ENCODE measurements at regions of chr17 and their contacts with region 1.

Region 1: DNA sequence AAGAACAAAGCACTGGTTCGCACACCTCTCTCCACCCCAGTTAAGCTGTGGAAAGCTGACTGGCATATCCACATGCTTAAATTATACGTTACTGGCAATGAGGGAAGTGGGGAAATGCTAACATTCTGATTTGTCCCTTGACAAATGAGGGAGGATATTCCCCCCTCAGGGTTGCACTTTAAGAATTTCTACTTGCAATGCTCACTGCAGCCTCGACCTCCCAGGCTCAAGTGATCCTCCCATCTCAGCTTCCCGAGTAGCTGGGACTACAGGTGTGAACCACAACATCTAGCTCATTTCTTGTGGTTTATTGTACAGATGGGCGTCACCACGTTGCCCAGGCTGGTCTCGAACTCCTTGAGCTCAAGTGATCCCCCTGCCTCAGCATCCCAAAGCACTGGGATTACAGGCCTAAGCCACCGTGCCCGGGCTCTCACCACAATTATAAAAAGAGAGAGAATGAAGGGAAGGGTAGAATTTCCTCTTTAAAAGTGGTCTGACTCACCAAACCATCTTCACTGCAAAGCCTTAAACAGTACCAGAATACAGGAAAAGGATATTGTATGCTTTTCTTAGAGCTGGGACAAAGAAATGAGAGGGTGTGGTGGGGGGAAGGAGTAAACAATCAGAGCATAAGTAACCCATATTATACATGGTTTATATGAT is 38.9 kb downstream of the KANSL1 start:
- DNase-seq: peak; percentile 40
- ATAC-seq: peak; percentile 16
- H3K4me3 Mint-ChIP-seq: peak overlapping the region; percentile 46
- H3K27ac Mint-ChIP-seq: peak overlapping the region; percentile 52
- H3K4me1 Mint-ChIP-seq: peaks cover 90% of the 10 kb centered on the region
- H3K27me3 Mint-ChIP-seq: no peaks in the 10 kb centered on the region

Region 2: GRCh38 chr17:45747911-45748310 is 406.4 kb before region 1 on chr17:
- CTCF ChIA-PET with region 1: no interaction called
- POLR2A ChIA-PET with region 1: no interaction called
- intact Hi-C with region 1: no loop called
- DNase-seq: no peak
- ATAC-seq: no peak
- H3K4me3 Mint-ChIP-seq: no peak overlapping the region
- H3K27ac Mint-ChIP-seq: no peak overlapping the region
- H3K4me1 Mint-ChIP-seq: no peaks in the 10 kb centered on the region
- H3K27me3 Mint-ChIP-seq: peaks cover 8% of the 10 kb centered on the region

Region 3: GRCh38 chr17:45990886-45991285 is 163.4 kb before region 1 on chr17:
- CTCF ChIA-PET with region 1: no interaction called
- POLR2A ChIA-PET with region 1: no interaction called
- intact Hi-C with region 1: no loop called
- DNase-seq: no peak
- ATAC-seq: no peak
- H3K4me3 Mint-ChIP-seq: no peak overlapping the region
- H3K27ac Mint-ChIP-seq: no peak overlapping the region
- H3K4me1 Mint-ChIP-seq: no peaks in the 10 kb centered on the region
- H3K27me3 Mint-ChIP-seq: no peaks in the 10 kb centered on the region

Region 4: GRCh38 chr17:46100590-46100989 is 53.7 kb before region 1 on chr17:
- CTCF ChIA-PET with region 1: interaction called, 5 read pairs
- POLR2A ChIA-PET with region 1: no interaction called
- intact Hi-C with region 1: loop called (anchors 2 to 5 kb)
- DNase-seq: no peak
- ATAC-seq: no peak
- H3K4me3 Mint-ChIP-seq: no peak overlapping the region
- H3K27ac Mint-ChIP-seq: peak overlapping the region; percentile 80
- H3K4me1 Mint-ChIP-seq: peaks cover 71% of the 10 kb centered on the region
- H3K27me3 Mint-ChIP-seq: no peaks in the 10 kb centered on the region

Region 5: GRCh38 chr17:46121841-46122485 is 32.3 kb before region 1 on chr17:
- CTCF ChIA-PET with region 1: interaction called, 3 read pairs
- POLR2A ChIA-PET with region 1: no interaction called
- intact Hi-C with region 1: loop called (anchors 1 to 5 kb)
- DNase-seq: no peak
- ATAC-seq: peak; percentile 66
- H3K4me3 Mint-ChIP-seq: peak overlapping the region; percentile 13
- H3K27ac Mint-ChIP-seq: peak overlapping the region; percentile 23
- H3K4me1 Mint-ChIP-seq: peaks cover 81% of the 10 kb centered on the region
- H3K27me3 Mint-ChIP-seq: no peaks in the 10 kb centered on the region

Region 6: DNA sequence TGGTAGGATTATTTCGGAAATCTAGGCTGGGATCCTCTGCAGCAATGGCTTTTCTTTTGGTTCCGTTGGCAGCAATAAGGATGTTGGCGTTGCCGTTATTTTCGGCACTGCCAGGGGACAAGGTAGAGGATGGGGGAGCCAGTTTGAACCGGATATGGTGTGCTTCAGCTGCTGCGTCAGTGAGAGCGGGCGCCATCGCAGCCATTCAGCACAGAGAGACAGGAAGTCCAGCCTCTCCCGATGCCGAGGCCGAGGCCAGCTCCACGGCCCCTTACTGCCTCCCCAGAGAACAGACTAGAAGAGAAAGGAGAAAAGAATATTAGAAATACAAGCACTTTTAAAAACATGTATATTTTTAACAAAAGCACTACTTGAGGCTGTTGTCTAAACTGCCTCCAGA is 17.7 kb after region 1 on chr17:
- CTCF ChIA-PET with region 1: interaction called, 4 read pairs
- POLR2A ChIA-PET with region 1: interaction called, 5 read pairs
- intact Hi-C with region 1: loop called in 1 of 2 experiments (anchors 2 kb)
- DNase-seq: no peak
- ATAC-seq: peak; percentile 44
- H3K4me3 Mint-ChIP-seq: no peak overlapping the region
- H3K27ac Mint-ChIP-seq: peak overlapping the region; percentile 56
- H3K4me1 Mint-ChIP-seq: peaks cover 92% of the 10 kb centered on the region
- H3K27me3 Mint-ChIP-seq: no peaks in the 10 kb centered on the region

Region 7: DNA sequence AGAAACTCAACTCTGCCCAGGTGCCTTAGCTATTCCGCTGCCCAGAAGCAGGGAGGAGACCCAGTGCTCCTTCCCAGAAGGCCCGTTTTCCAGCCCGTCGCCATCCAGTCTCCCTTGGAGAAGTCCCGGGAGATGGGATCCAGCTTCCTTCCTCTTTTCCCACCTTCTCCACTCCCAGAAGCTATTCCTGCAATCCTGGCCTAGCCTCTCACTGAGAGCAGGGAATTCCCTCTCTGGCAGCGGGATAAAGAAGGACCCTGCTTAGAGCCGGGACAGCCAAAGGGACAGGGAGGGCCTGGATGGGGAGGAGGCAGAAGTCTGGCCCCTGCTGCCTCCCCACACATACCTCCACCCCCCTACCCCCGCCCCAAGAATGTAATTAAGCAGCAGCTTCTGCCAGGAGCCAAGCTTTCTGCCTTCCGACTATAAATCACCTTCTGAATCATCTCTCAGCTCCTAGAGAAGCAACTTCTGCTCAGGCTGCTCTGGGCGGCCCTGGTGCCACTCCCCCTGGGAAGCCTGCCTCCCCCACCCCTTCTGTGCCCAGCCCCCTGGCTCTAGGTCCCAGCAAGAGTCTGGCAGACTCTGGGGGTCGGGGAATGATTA is 657.8 kb after region 1 on chr17:
- CTCF ChIA-PET with region 1: no interaction called
- POLR2A ChIA-PET with region 1: no interaction called
- intact Hi-C with region 1: no loop called
- DNase-seq: no peak
- ATAC-seq: no peak
- H3K4me3 Mint-ChIP-seq: no peak overlapping the region
- H3K27ac Mint-ChIP-seq: no peak overlapping the region
- H3K4me1 Mint-ChIP-seq: peaks cover 2% of the 10 kb centered on the region
- H3K27me3 Mint-ChIP-seq: peaks cover 37% of the 10 kb centered on the region

Measured in activated CD4-positive, alpha-beta T cell treated with anti-CD3 and anti-CD28 coated beads for 36 hours (primary cell).